ENCODE measurements at regions of chr17 and their contacts with region 1.

Region 1: GRCh38 chr17:55770148-55770870 is 19.5 kb downstream of the PCTP start:
- DNase-seq: no peak
- H3K4me3 ChIP-seq: no peak overlapping the region
- H3K27ac ChIP-seq: no peak overlapping the region
- H3K4me1 ChIP-seq: no peaks in the 10 kb centered on the region
- H3K27me3 ChIP-seq: no peaks in the 10 kb centered on the region
- CTCF ChIP-seq: peak in 3 of 4 experiments; percentile 65 to 76 (median 72)
- POLR2A ChIP-seq: no peak

Region 2: GRCh38 chr17:55641676-55642081 is 128.6 kb before region 1 on chr17:
- intact Hi-C with region 1: loop called (anchors 10 kb)
- DNase-seq: peak; percentile 41
- H3K4me3 ChIP-seq: no peak overlapping the region
- H3K27ac ChIP-seq: no peak overlapping the region
- H3K4me1 ChIP-seq: no peaks in the 10 kb centered on the region
- H3K27me3 ChIP-seq: no peaks in the 10 kb centered on the region
- CTCF ChIP-seq: peak in 3 of 4 experiments; percentile 34 to 45 (median 40)
- POLR2A ChIP-seq: no peak

Region 3: DNA sequence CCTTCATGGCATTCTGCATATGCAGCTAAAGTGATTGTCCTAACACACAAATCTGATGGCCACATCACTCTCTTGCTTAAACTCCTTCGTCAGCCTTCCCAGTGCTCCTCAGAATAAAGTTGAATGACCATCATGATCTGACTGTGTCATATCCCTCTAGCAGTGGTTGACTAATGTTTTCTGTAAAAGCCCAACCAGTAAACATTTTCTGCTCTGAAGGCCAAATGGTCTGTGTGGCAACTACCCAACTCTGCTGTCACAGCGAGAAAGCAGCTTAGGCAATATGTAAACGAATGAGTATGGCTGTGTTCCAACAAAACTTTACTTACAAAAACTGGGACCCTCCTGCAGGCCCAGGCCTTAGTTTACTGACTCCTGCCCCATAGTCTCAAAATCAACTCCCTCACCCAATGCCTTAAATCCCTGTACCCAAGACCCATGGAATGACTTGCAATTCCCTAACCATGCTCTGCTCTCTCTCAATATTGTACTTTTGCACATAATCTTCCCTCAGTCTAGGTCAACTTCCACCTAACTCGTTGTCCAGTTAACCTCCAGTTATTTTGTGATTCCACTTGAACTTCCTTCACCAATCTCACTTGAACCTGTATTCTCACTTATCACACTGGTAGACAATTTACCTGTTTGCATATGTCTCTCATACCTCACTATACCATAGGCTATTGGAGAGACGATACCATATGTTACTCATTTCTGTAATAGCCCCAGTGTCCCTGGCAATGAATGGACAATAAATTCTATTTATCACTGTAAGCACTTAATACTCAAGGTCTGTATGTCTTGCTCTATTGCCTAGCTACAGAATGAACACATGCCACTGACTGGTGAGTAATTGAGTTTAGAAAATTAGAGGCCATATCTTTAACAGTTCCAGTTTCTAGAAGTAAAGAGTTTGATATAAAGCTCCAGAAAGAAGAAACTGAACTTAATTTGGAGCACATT is 76.8 kb before region 1 on chr17:
- intact Hi-C with region 1: no loop called
- DNase-seq: no peak
- H3K4me3 ChIP-seq: no peak overlapping the region
- H3K27ac ChIP-seq: no peak overlapping the region
- H3K4me1 ChIP-seq: no peaks in the 10 kb centered on the region
- H3K27me3 ChIP-seq: no peaks in the 10 kb centered on the region
- CTCF ChIP-seq: no peak
- POLR2A ChIP-seq: no peak

Region 4: DNA sequence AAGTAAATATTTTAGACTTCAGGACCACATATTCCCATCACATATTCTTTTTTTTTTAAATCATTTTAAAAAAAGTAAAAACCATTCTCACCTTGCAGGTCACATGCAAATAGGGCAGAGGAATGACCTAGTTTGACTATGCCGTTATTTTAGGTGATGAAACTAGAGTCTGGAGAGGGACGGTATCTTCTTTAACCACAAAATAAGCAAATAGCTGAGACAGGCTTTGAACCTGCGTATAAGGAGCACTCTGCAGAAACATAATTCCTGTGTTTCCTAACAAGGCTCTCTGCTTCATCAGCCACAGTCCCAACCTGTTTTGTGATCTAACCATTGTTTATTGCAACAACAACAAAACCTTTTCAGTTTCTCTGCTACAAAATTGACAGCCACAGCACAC is 102.1 kb after region 1 on chr17:
- intact Hi-C with region 1: no loop called
- DNase-seq: no peak
- H3K4me3 ChIP-seq: no peak overlapping the region
- H3K27ac ChIP-seq: no peak overlapping the region
- H3K4me1 ChIP-seq: no peaks in the 10 kb centered on the region
- H3K27me3 ChIP-seq: no peaks in the 10 kb centered on the region
- CTCF ChIP-seq: no peak
- POLR2A ChIP-seq: no peak